ENCODE measurements at regions of chr5 and their contacts with region 1.

Region 1: GRCh38 chr5:172417983-172418630 is 36.2 kb downstream of the SH3PXD2B start:
- DNase-seq: peak; percentile 85
- H3K4me3 ChIP-seq: no peak overlapping the region
- H3K27ac ChIP-seq: peak overlapping the region; percentile 81
- H3K27me3 ChIP-seq: no peaks in the 10 kb centered on the region
- CTCF ChIP-seq: no peak

Region 2: GRCh38 chr5:172315587-172316493 is 102.3 kb before region 1 on chr5:
- CTCF ChIA-PET with region 1: no interaction called
- POLR2A ChIA-PET with region 1: no interaction called
- DNase-seq: no peak
- H3K4me3 ChIP-seq: no peak overlapping the region
- H3K27ac ChIP-seq: no peak overlapping the region
- H3K27me3 ChIP-seq: peaks cover 2% of the 10 kb centered on the region
- CTCF ChIP-seq: no peak

Region 3: GRCh38 chr5:172389578-172390112 is 28.5 kb before region 1 on chr5:
- CTCF ChIA-PET with region 1: no interaction called
- POLR2A ChIA-PET with region 1: no interaction called
- DNase-seq: no peak
- H3K4me3 ChIP-seq: no peak overlapping the region
- H3K27ac ChIP-seq: no peak overlapping the region
- H3K27me3 ChIP-seq: no peaks in the 10 kb centered on the region
- CTCF ChIP-seq: 0 out of 2 replicates have a peak, but pooled peaks have one; percentile 1

Region 4: DNA sequence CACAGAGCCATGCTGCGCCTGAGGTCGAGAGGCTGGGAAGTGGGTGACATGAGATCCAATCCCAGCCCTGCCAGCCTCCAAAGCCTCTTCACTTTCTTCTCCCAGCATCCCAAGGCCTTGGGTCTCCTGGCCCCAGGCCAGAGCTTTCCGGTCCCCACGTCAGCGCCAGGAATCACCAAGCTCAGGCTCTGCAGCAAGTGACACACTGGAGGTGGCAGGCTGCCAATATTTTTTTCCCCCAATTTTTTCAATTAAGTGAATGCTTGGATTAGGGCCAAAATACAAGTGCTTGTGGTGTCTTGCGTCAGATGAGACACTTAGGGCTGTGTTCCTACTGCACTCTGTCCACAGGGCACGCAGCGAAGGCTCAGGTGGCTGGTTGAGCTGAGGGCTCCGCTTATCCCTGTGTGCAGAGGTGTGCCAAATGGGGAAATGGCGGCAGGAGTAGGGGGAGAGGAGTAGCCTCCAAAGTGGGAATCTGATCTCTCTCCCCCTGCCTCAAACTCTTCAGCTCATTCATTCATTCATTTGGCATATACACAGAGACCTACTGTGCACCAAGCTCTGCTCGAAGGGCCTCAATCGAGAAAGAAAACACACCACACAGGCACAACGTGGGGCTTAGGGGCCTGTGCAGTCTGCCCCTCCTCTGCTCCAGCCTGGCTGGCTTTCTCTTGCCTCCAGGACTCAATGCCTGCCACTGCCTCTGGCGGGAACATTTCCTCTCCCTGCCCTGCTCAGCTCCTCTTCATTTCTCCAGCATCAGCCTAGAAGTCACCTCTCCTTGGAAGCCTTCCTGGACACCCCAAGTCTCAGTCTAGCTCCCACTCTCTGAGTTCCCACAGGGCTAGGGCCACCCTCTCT is 19.6 kb after region 1 on chr5:
- CTCF ChIA-PET with region 1: no interaction called
- POLR2A ChIA-PET with region 1: interaction called, 10 read pairs
- DNase-seq: no peak
- H3K4me3 ChIP-seq: no peak overlapping the region
- H3K27ac ChIP-seq: no peak overlapping the region
- H3K27me3 ChIP-seq: no peaks in the 10 kb centered on the region
- CTCF ChIP-seq: no peak

Region 5: GRCh38 chr5:172450861-172451695 is 33.0 kb after region 1 on chr5:
- CTCF ChIA-PET with region 1: interaction called, 12 read pairs
- POLR2A ChIA-PET with region 1: no interaction called
- DNase-seq: no peak
- H3K4me3 ChIP-seq: peak overlapping the region; percentile 21
- H3K27ac ChIP-seq: no peak overlapping the region
- H3K27me3 ChIP-seq: no peaks in the 10 kb centered on the region
- CTCF ChIP-seq: peak; percentile 77

Region 6: DNA sequence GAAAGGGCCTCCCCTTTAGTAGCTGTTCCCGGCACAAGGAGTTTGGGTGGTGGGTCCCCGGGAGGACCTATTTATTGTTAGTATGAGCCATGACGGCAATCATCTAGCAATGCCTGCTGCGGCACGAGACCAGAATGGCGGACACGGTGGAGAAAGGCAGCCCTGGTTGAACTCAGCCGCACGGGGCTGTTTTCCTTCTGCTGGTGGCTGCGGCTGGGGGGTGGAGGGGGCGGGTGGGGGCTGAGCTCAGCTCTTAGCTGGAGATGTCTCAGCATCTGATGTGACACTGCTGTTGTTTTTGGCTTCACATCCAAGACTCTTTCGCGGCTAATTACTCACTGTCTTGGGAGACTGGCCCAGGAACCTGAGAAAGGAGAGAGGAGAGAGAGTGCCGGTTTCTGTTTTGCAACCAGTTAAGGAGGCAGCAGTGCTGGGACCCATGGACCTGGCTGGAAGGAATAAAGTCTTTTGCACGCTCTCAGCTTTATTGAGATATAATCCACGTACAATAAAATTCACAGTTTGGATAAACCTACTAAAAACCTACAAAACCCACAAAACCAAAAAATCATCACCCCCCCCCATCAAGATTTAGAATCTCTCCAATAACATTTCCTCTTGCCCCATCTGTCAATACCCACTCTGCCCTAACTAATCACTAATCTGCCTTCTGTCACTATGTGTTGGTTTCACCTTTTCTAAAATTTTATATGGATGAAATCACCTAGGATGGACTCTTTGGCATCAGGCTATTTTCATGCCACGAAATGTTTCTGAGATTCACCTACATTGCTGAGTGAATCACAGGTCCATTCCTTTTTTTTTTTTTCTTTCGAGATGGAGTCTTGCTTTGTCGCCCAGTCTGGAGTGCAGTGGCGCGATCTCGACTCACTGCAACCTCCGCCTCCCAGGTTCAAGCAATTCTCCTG is 141.2 kb after region 1 on chr5:
- CTCF ChIA-PET with region 1: no interaction called
- POLR2A ChIA-PET with region 1: no interaction called
- DNase-seq: peak; percentile 49
- H3K4me3 ChIP-seq: peak overlapping the region; percentile 50
- H3K27ac ChIP-seq: peak overlapping the region; percentile 39
- H3K27me3 ChIP-seq: peaks cover 40% of the 10 kb centered on the region
- CTCF ChIP-seq: no peak